CD4-positive, alpha-beta T cell (primary cell): ENCODE measurements at regions of chr1 and their contacts with region 1.

Region 1: DNA sequence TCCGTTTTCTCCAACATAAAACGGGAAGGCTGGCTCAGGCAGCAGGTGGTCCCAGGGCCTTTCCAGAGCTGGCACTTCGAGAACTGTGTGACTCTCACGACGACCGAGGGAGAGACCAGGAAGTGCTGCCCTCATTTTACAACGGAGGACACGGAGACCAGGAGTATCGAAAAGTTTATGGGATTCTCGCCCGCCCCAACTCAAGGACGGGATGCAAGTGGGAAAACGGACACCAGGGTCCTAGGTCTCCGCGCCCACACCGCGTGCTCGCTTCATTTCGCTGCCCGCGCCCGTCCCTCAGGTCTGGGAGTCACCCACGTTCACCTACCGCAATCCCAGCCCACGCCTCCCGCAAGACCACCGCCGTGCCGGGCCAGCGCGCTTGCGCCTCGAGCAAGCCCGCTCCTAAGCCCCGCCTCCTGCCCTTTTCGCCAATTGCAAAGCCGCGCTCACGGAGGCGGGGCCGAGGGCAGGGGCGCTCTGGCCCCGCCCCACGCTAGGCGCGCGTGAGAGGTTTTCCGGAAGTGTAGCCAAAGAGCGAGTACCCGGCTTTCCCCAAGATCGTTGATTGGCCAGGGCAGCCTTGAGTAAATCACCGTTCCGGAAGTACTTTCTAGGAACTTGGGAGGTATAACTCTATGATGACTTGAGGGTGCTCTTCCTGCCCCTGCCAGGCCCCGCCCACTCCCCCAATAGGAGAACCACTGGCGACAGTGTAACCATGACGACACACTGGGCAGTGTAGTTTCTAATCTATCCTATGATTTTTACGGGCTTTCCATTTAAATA is at the start of gene PARS2:
- DNase-seq: peak; percentile 88 to 99 (median 94)
- ATAC-seq: peak; percentile 96
- H3K4me3 ChIP-seq: peak within 1 kb of the TSS; percentile 98
- H3K4me3 Mint-ChIP-seq: peak within 1 kb of the TSS; percentile 98
- H3K27ac ChIP-seq: peak within 1 kb of the TSS in 1 of 2 donors; percentile 71
- H3K27ac Mint-ChIP-seq: peak within 1 kb of the TSS; percentile 70
- H3K4me1 ChIP-seq: peaks cover 8% of the 10 kb centered on the region
- H3K4me1 Mint-ChIP-seq: peaks cover 26% of the 10 kb centered on the region
- H3K27me3 ChIP-seq: no peaks in the 10 kb centered on the region
- H3K27me3 Mint-ChIP-seq: no peaks in the 10 kb centered on the region
- CTCF ChIP-seq: no peak
- total RNA-seq, gene PARS2: not detected

Region 2: GRCh38 chr1:53220171-53220961 is 1544.0 kb before region 1 on chr1 and contains the start of gene CZIB:
- CTCF ChIA-PET with region 1: no interaction called
- POLR2A ChIA-PET with region 1: no interaction called
- intact Hi-C with region 1: loop called in 1 of 2 experiments (anchors 10 kb)
- DNase-seq: peak; percentile 80 to 96 (median 89)
- ATAC-seq: peak; percentile 90
- H3K4me3 ChIP-seq: peak within 1 kb of the TSS; percentile 84
- H3K4me3 Mint-ChIP-seq: peak within 1 kb of the TSS; percentile 98
- H3K27ac ChIP-seq: peak within 1 kb of the TSS; percentile 95 to 96
- H3K27ac Mint-ChIP-seq: peak within 1 kb of the TSS; percentile 97
- H3K4me1 ChIP-seq: peaks cover 19% of the 10 kb centered on the region
- H3K4me1 Mint-ChIP-seq: peaks cover 35% of the 10 kb centered on the region
- H3K27me3 ChIP-seq: no peaks in the 10 kb centered on the region
- H3K27me3 Mint-ChIP-seq: no peaks in the 10 kb centered on the region
- CTCF ChIP-seq: no peak
- total RNA-seq, gene CZIB: 28.8 to 28.9 TPM

Region 3: DNA sequence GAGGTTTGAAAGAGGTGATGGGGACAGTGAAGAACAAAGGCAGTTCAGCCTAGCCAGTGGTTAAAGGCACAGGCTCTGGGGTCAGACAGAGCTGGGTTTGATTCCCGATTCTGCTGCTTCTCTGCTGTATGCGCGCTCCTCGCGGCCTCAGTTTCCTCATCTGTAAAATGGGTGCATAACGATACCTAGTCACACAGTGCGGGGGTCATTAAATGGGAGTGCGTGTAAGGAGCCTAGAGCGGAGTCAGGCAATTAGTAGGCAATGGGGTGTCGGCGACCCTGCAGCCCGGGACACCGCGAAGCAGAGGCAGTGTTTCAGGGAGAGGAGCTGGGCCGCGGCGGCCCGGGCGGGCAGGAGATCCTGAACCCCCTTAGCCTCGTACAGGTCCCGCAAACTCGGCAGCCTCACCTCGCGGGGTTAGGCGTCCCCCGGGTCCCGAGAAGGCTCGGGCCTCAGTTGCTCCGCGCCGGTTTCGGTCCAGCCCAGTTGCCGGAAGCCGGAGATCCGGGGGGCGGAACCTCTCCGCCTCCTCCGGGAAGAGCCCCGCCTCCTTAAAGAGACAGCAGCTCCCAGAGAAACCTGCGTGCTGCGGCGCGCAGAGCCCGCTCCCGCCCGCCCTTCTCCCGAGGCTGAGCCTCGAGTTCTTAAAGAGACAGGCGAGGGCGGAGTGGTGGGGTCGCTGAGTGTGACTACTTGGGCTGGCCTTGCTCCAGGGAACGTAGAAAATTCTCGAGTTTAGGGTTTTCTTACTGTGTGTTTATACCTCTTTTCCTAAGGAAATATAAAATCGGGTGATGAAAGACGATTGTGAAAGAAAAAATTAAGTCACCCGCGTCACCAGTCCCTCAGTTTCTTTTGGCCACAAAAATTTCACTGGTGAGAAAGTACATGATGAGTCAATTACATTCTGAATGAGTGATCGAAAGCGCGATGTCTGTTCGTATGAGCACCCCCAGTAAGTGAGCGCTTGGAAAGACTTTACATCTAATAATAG is 874.7 kb before region 1 on chr1 and contains the start of gene YIPF1:
- CTCF ChIA-PET with region 1: no interaction called
- POLR2A ChIA-PET with region 1: no interaction called
- intact Hi-C with region 1: loop called in 1 of 2 experiments (anchors 5 kb)
- DNase-seq: peak; percentile 69 to 92 (median 84)
- ATAC-seq: peak; percentile 99
- H3K4me3 ChIP-seq: peak within 1 kb of the TSS; percentile 98
- H3K4me3 Mint-ChIP-seq: peak within 1 kb of the TSS; percentile 94
- H3K27ac ChIP-seq: peak within 1 kb of the TSS; percentile 29 to 45
- H3K27ac Mint-ChIP-seq: peak within 1 kb of the TSS; percentile 93
- H3K4me1 ChIP-seq: peaks cover 18% of the 10 kb centered on the region
- H3K4me1 Mint-ChIP-seq: peaks cover 44% of the 10 kb centered on the region
- H3K27me3 ChIP-seq: no peaks in the 10 kb centered on the region
- H3K27me3 Mint-ChIP-seq: no peaks in the 10 kb centered on the region
- CTCF ChIP-seq: no peak
- total RNA-seq, gene YIPF1: 4.3 to 5.5 TPM

Region 4: GRCh38 chr1:54715493-54716298 is 48.6 kb before region 1 on chr1 and contains the start of gene TTC4:
- CTCF ChIA-PET with region 1: no interaction called
- POLR2A ChIA-PET with region 1: no interaction called
- intact Hi-C with region 1: loop called (anchors 1 kb)
- DNase-seq: peak; percentile 67 to 93 (median 81)
- ATAC-seq: peak; percentile 97
- H3K4me3 ChIP-seq: peak within 1 kb of the TSS; percentile 87
- H3K4me3 Mint-ChIP-seq: peak within 1 kb of the TSS; percentile 93
- H3K27ac ChIP-seq: peak within 1 kb of the TSS; percentile 43 to 71
- H3K27ac Mint-ChIP-seq: peak within 1 kb of the TSS; percentile 74
- H3K4me1 ChIP-seq: peaks cover 18% of the 10 kb centered on the region
- H3K4me1 Mint-ChIP-seq: peaks cover 40% of the 10 kb centered on the region
- H3K27me3 ChIP-seq: no peaks in the 10 kb centered on the region
- H3K27me3 Mint-ChIP-seq: no peaks in the 10 kb centered on the region
- CTCF ChIP-seq: no peak
- total RNA-seq, gene TTC4: 7.3 to 7.6 TPM

Region 5: GRCh38 chr1:54782156-54782555 is 17.8 kb after region 1 on chr1:
- CTCF ChIA-PET with region 1: no interaction called
- POLR2A ChIA-PET with region 1: no interaction called
- intact Hi-C with region 1: no loop called
- DNase-seq: no peak
- ATAC-seq: no peak
- H3K4me3 ChIP-seq: no peak overlapping the region
- H3K4me3 Mint-ChIP-seq: no peak overlapping the region
- H3K27ac ChIP-seq: no peak overlapping the region
- H3K27ac Mint-ChIP-seq: no peak overlapping the region
- H3K4me1 ChIP-seq: no peaks in the 10 kb centered on the region
- H3K4me1 Mint-ChIP-seq: no peaks in the 10 kb centered on the region
- H3K27me3 ChIP-seq: no peaks in the 10 kb centered on the region
- H3K27me3 Mint-ChIP-seq: no peaks in the 10 kb centered on the region
- CTCF ChIP-seq: no peak

Region 6: DNA sequence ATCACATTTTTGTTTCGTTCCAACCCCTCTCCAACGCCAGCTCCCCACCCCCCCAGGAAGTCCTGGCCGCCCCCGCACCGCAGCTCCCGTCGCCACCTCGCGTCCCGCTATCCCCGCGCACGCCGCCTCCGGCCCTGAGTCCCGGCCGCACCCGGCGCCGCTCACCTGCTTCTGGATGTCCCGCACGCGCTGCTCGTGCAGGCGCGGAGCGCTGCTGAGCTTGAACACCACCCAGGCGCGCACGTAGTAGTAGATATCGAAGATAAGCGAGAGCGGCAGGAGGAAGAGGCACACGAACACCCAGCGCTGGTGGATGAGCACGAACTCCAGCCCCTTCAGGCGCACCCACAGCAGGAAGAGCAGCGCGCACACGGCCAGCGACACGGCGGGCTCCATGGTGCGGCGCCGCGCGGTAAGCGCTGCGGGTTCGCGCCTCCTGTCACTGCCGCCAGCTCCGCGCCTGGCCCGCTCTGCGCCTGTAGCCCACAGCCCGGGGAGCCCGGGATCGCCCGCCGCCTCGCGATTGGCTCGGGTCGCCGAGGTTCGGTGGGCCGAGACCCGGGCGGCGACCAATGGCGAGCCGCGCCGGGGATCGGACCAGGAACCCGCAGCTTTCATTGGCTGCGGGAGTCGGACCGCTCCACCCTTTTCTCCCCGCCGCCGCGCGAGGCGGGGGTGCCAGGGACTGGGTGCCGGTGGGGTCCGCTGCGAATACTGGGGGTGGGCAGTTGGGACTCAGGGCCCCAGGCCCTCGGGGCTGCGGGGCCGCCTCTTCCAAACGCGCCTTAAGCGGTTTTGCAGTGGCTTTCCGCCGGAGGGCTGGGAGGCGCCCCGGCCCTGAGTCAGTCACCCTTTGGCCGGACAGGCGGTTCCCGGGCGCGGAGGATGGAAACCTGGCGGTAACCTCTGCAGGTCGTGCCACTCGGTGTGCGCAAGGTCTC is 122.7 kb after region 1 on chr1 and contains the start of gene DHCR24:
- CTCF ChIA-PET with region 1: no interaction called
- POLR2A ChIA-PET with region 1: no interaction called
- intact Hi-C with region 1: loop called in 1 of 2 experiments (anchors 2 kb)
- DNase-seq: peak; percentile 35 to 85 (median 63)
- ATAC-seq: peak; percentile 77
- H3K4me3 ChIP-seq: peak within 1 kb of the TSS; percentile 64
- H3K4me3 Mint-ChIP-seq: peak within 1 kb of the TSS; percentile 96
- H3K27ac ChIP-seq: no peak within 1 kb of the TSS
- H3K27ac Mint-ChIP-seq: no peak within 1 kb of the TSS
- H3K4me1 ChIP-seq: peaks cover 22% of the 10 kb centered on the region
- H3K4me1 Mint-ChIP-seq: peaks cover 26% of the 10 kb centered on the region
- H3K27me3 ChIP-seq: peaks cover 0 to 2% of the 10 kb centered on the region in 2 experiments
- H3K27me3 Mint-ChIP-seq: peaks cover 4% of the 10 kb centered on the region
- CTCF ChIP-seq: no peak
- total RNA-seq, gene DHCR24: 0.34 to 0.55 TPM